Activated CD4-positive, alpha-beta memory T cell treated with anti-CD3 and anti-CD28 coated beads for 36 hours (primary cell): ENCODE measurements at regions of chr18 and their contacts with region 1.

Region 1: DNA sequence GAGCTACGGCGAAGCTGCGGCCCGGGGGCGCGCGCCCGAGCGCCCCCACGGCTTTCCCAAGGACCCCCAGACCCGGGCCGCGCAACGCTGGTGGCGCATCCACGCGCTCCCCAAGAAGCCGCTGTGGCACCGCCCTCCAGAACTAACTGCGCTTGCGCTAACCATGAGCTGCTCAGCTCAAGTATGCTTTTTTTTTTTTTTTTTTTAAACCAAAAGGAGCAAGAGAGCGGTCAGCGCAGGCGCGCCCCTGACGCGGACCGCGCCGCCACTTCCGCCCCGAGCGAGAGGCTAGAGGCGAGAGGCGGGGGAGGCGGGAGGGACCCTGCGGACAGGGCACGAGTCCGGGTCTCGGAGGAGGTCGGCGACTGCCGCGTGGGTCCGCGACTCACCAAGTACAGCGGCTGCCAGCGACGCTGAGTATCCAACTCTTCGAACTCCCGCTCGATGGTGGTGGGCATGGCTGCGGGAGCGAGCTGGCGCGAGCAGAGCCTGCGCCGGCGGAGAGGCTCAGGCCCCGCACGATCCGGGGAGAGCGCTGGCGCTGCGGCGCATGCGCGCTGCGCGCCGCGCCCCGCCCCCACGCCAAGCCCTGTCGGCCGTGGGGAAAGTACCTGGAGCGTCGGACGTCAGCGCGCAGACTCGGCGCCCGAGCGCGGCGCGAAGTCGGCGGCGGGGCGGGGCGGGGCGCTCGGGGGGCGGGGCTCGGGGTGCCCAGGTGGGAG is at the start of gene PTPN2:
- DNase-seq: peak; percentile 94
- H3K4me3 Mint-ChIP-seq: peak within 1 kb of the TSS; percentile 78
- H3K27ac Mint-ChIP-seq: peak within 1 kb of the TSS; percentile 92
- H3K4me1 Mint-ChIP-seq: peaks cover 56% of the 10 kb centered on the region
- H3K27me3 Mint-ChIP-seq: no peaks in the 10 kb centered on the region
- total RNA-seq, gene PTPN2: 68.8 to 73.3 TPM

Region 2: GRCh38 chr18:12702221-12703095 is 181.4 kb before region 1 on chr18 and contains the starts of genes CEP76 and PSMG2:
- CTCF ChIA-PET with region 1: no interaction called
- POLR2A ChIA-PET with region 1: interaction called, 14 read pairs
- intact Hi-C with region 1: loop called (anchors 1 kb)
- DNase-seq: peak; percentile 88
- H3K4me3 Mint-ChIP-seq: peak within 1 kb of the TSS; percentile 96
- H3K27ac Mint-ChIP-seq: peak within 1 kb of the TSS; percentile 98
- H3K4me1 Mint-ChIP-seq: peaks cover 35% of the 10 kb centered on the region
- H3K27me3 Mint-ChIP-seq: no peaks in the 10 kb centered on the region
- total RNA-seq, gene CEP76: 14.4 to 15.0 TPM
- total RNA-seq, gene PSMG2: 112 to 119 TPM

Region 3: GRCh38 chr18:12776821-12777471 is 106.9 kb before region 1 on chr18:
- CTCF ChIA-PET with region 1: interaction called, 4 read pairs
- POLR2A ChIA-PET with region 1: interaction called, 12 read pairs
- intact Hi-C with region 1: no loop called
- DNase-seq: no peak
- H3K4me3 Mint-ChIP-seq: no peak overlapping the region
- H3K27ac Mint-ChIP-seq: no peak overlapping the region
- H3K4me1 Mint-ChIP-seq: peaks cover 2% of the 10 kb centered on the region
- H3K27me3 Mint-ChIP-seq: no peaks in the 10 kb centered on the region

Region 4: GRCh38 chr18:12843420-12844350 is 40.2 kb before region 1 on chr18:
- CTCF ChIA-PET with region 1: interaction called, 5 read pairs
- POLR2A ChIA-PET with region 1: interaction called, 21 read pairs
- intact Hi-C with region 1: loop called (anchors 1 kb)
- DNase-seq: peak; percentile 25
- H3K4me3 Mint-ChIP-seq: peak overlapping the region; percentile 13
- H3K27ac Mint-ChIP-seq: peak overlapping the region; percentile 76
- H3K4me1 Mint-ChIP-seq: peaks cover 86% of the 10 kb centered on the region
- H3K27me3 Mint-ChIP-seq: no peaks in the 10 kb centered on the region

Region 5: DNA sequence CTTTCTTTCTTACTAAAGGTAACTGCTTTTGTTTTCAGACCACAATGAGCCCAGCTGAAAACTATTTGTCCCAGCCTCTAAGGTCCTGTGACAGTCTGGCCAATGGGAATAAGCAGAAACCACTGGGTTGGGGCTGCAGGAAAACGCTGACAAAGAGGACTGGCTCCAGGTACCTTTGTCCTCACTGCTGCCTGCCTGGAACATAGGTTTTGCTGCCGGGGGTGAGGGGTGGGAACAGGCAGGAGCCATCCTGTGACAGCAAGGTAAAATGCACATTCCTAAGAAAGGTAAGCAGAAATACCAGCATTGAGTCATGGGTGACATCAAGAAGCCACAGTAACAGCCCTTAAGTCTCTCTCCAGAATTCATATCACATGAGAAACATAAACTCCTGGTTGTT is 21.4 kb before region 1 on chr18:
- CTCF ChIA-PET with region 1: no interaction called
- POLR2A ChIA-PET with region 1: interaction called, 12 read pairs
- intact Hi-C with region 1: loop called (anchors 2 kb)
- DNase-seq: no peak
- H3K4me3 Mint-ChIP-seq: no peak overlapping the region
- H3K27ac Mint-ChIP-seq: peak overlapping the region; percentile 49
- H3K4me1 Mint-ChIP-seq: peaks cover 48% of the 10 kb centered on the region
- H3K27me3 Mint-ChIP-seq: no peaks in the 10 kb centered on the region

Region 6: GRCh38 chr18:12947355-12948041 is 63.7 kb after region 1 on chr18 and contains the start of gene SEH1L:
- CTCF ChIA-PET with region 1: no interaction called
- POLR2A ChIA-PET with region 1: interaction called, 12 read pairs
- intact Hi-C with region 1: loop called (anchors 1 kb)
- DNase-seq: peak; percentile 100
- H3K4me3 Mint-ChIP-seq: peak within 1 kb of the TSS; percentile 95
- H3K27ac Mint-ChIP-seq: peak within 1 kb of the TSS; percentile 97
- H3K4me1 Mint-ChIP-seq: peaks cover 45% of the 10 kb centered on the region
- H3K27me3 Mint-ChIP-seq: no peaks in the 10 kb centered on the region
- total RNA-seq, gene SEH1L: 90.3 to 92.5 TPM